Adrenal gland (tissue), 19 donors: ENCODE measurements at regions of chr6 and their contacts with region 1.

Region 1: DNA sequence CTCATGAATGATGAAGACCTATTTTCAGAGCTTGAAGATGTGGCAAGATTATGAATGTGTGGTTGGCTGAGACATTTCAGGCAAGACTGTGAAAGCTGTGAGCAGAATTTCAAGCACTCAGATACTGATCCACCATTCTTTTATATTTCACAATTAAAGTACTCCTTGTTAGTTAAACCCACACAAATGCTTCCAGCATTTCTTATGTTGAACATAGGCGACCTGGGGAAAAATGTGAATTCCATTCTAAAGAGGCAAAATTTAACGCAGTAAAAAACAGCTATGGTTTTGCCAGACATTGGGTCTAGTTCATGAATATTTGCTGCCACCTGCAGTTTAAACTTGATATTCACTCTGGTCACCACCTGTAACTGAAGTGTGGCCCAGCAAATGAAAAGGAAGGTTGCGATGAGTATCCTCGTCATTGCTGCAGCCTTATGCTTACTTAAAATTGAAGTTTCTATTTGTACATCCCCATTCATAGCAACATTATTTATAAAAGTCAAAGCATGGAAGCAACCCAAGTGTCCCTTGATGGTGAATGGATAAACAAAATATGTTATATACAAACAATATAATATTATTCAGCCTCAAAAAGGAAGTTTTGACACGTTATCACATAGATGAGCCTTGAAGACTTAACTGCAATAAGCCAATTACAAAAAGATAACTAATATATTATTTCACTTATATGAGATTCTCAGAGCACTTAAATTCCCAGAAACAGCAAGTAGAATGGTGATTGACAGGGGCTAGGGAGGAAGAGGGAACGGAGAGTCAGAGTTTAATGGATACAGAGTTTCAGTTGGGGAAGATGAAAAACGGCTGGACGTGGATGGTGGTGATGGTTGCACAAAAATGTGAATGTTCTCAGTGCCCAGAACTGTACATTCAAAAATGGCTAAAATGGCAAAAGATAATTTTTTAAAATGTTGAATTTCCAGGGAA is 32.4 kb upstream of the FAM184A start:
- DNase-seq: peak; percentile 21 to 63 (median 56)
- H3K4me3 ChIP-seq: no peak overlapping the region
- H3K27ac ChIP-seq: no peak overlapping the region
- H3K4me1 ChIP-seq: no peaks in the 10 kb centered on the region
- H3K27me3 ChIP-seq: no peaks in the 10 kb centered on the region
- CTCF ChIP-seq: peak; percentile 43 to 87 (median 76)
- POLR2A ChIP-seq: no peak

Region 2: DNA sequence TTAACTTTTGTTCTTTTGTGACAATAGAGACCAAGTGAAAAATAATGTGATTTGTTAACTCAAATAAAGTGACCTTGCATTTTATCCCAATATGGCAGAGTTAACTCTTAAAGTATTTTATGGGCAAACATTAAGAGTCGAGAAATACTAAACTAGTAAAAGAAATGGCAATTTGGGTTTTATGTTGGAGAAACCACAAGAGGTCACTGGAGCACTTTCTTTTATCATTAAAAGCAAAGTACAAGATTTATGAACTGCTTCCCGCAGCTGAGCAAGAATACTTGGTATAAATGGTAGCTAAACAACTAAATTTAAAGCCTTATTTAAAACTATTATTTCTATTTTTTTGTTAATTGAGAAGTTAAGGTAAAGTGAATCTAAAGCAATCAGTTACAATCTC is 142.5 kb before region 1 on chr6:
- intact Hi-C with region 1: loop called (anchors 2 to 5 kb)
- DNase-seq: no peak
- H3K4me3 ChIP-seq: no peak overlapping the region
- H3K27ac ChIP-seq: no peak overlapping the region
- H3K4me1 ChIP-seq: no peaks in the 10 kb centered on the region
- H3K27me3 ChIP-seq: no peaks in the 10 kb centered on the region
- CTCF ChIP-seq: peak; percentile 39 to 68 (median 52)
- POLR2A ChIP-seq: no peak